CD8-positive, alpha-beta T cell (primary cell): ENCODE measurements at regions of chr19 and their contacts with region 1.

Region 1: GRCh38 chr19:16371540-16371986 is 46.9 kb downstream of the KLF2 start:
- DNase-seq: peak; percentile 87 to 97 (median 92)
- ATAC-seq: peak; percentile 41
- H3K4me3 ChIP-seq: peak overlapping the region; percentile 33 to 44
- H3K4me3 Mint-ChIP-seq: no peak overlapping the region
- H3K27ac ChIP-seq: peak overlapping the region; percentile 91 to 95
- H3K27ac Mint-ChIP-seq: no peak overlapping the region
- H3K4me1 ChIP-seq: peaks cover 95% of the 10 kb centered on the region
- H3K4me1 Mint-ChIP-seq: peaks cover 68% of the 10 kb centered on the region
- H3K27me3 ChIP-seq: no peaks in the 10 kb centered on the region
- H3K27me3 Mint-ChIP-seq: no peaks in the 10 kb centered on the region
- CTCF ChIP-seq: no peak

Region 2: GRCh38 chr19:16330368-16330801 is 41.2 kb before region 1 on chr19:
- CTCF ChIA-PET with region 1: interaction called, 200 read pairs
- POLR2A ChIA-PET with region 1: interaction called, 2,627 read pairs
- intact Hi-C with region 1: loop called (anchors 1 kb)
- DNase-seq: peak; percentile 88 to 99 (median 95)
- ATAC-seq: peak; percentile 74
- H3K4me3 ChIP-seq: no peak overlapping the region
- H3K4me3 Mint-ChIP-seq: peak overlapping the region; percentile 59
- H3K27ac ChIP-seq: peak overlapping the region; percentile 93 to 99
- H3K27ac Mint-ChIP-seq: peak overlapping the region; percentile 96
- H3K4me1 ChIP-seq: peaks cover 36% of the 10 kb centered on the region
- H3K4me1 Mint-ChIP-seq: peaks cover 46% of the 10 kb centered on the region
- H3K27me3 ChIP-seq: no peaks in the 10 kb centered on the region
- H3K27me3 Mint-ChIP-seq: no peaks in the 10 kb centered on the region
- CTCF ChIP-seq: no peak

Region 3: DNA sequence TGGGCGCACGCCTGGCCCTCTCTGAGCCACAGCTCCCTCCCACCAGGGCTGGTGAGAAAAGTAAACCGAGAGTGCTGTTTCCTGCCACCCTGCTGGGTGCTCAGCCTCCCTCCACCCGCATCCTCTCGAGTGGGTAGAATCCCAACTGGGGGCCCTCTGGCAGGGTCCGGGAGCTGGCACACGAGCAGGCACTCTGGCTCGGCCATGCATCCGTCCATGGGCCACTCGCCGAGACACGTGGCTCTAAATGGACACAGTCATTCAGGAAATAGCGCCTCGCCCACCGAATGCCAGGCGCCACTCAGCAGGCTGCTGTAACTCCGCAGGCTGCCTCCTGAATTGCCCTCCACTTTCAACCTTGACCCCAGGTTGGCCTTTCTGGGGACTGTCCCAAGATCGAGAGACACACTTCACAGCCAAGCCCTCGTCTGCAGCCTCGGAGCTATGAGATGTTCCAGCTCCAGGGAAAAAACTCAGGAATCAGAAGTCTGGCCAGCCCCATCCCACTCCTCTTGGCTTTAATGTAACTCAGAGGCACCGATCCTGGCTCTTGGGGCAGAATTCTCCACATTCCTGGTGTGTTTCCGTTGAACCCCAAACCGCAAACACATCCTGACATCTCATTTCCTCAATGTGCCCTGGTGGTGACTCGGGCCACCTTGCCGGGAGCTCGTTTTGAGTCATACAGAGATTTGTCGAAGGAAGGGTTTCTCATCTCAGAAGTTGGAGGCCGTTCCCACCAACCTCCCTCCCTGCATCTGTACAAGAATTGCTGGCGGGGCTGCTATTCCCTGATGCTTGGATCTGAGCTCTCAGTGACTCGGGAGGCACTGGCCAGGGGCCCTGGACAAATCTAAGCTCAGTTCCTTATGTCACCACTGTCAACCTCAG is 32.8 kb before region 1 on chr19:
- CTCF ChIA-PET with region 1: interaction called, 200 read pairs
- POLR2A ChIA-PET with region 1: interaction called, 2,627 read pairs
- intact Hi-C with region 1: loop called in 1 of 2 experiments (anchors 1 kb)
- DNase-seq: peak in 6 of 9 experiments; percentile 55 to 83 (median 62)
- ATAC-seq: peak; percentile 49
- H3K4me3 ChIP-seq: peak overlapping the region; percentile 25 to 38
- H3K4me3 Mint-ChIP-seq: peak overlapping the region; percentile 81
- H3K27ac ChIP-seq: peak overlapping the region; percentile 28 to 76
- H3K27ac Mint-ChIP-seq: peak overlapping the region; percentile 94
- H3K4me1 ChIP-seq: peaks cover 71% of the 10 kb centered on the region
- H3K4me1 Mint-ChIP-seq: peaks cover 61% of the 10 kb centered on the region
- H3K27me3 ChIP-seq: no peaks in the 10 kb centered on the region
- H3K27me3 Mint-ChIP-seq: no peaks in the 10 kb centered on the region
- CTCF ChIP-seq: no peak

Region 4: DNA sequence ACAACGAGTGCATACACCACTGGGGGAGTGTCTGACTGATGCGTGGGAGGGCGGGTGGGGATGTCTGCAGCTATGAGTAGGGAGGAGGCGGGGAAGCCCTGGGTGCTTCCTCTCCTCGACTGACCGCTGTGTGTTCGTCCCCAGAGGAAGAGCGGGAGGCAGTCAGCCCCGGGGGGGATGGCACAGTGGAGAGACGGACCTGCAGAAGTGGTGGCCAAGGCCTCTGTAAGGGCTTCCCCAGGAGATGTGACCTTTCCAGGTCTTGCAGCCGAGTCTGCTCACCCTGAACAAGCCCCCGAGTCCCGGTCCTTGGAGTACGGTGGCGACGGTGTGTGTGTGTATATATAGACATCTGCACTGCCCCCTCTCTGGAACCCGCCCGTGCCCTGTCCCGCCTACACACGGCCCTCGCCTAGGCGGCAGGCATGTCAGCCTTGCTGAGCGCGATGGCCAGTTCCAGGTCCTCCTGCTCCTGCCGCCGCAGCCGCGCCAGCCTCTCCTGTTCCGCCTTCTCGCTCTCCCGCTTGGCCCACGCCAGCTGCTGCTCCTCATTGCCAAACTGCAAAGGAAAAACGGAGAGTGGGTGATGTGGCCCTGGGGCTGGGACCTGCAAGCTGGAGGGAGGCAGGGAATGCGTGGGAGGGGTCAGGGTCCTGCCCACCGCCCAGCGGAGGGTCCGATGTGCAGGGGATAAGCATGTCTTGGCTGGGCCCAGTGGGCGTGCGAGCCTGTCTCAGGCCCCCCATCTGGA is 16.1 kb before region 1 on chr19:
- CTCF ChIA-PET with region 1: interaction called, 3 read pairs
- POLR2A ChIA-PET with region 1: interaction called, 26 read pairs
- intact Hi-C with region 1: loop called in 1 of 2 experiments (anchors 2 kb)
- DNase-seq: peak in 2 of 9 experiments; percentile 2 to 52
- ATAC-seq: peak; percentile 63
- H3K4me3 ChIP-seq: no peak overlapping the region
- H3K4me3 Mint-ChIP-seq: no peak overlapping the region
- H3K27ac ChIP-seq: no peak overlapping the region
- H3K27ac Mint-ChIP-seq: peak overlapping the region; percentile 62
- H3K4me1 ChIP-seq: peaks cover 56% of the 10 kb centered on the region
- H3K4me1 Mint-ChIP-seq: peaks cover 63% of the 10 kb centered on the region
- H3K27me3 ChIP-seq: no peaks in the 10 kb centered on the region
- H3K27me3 Mint-ChIP-seq: no peaks in the 10 kb centered on the region
- CTCF ChIP-seq: no peak

Region 5: DNA sequence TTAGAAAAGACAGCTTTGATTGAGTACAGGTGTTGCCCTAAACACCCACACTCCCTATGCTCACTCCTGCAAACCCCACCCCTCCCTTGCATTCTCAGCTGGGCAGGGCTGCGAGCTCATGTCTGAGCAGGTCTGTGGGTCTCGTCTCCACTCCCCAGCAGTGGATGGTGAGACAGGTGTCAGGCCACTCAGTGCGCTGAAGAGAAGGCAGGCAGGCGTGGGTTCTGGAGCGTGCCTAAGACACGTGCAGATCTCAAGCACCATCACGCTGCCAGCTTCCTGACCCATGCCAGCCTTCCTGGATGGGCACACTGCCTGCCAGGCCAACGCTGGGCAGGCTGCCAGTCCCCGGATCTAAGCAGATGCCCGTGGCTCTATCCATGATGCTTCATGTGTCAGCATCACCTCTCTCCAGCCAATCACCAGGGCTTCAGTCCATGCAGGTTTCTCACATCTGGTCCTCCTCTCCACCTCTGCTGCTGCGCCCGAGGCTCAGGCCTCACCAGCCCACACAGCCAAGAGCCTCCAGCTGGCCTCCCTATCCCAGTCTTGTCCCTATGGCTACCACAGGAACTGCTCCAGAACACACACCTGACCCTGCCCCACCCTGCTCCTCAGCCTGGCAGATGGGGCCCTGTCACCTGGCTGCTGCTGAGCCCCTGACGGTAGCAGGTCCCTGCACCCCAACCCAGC is 57.6 kb after region 1 on chr19:
- CTCF ChIA-PET with region 1: no interaction called
- POLR2A ChIA-PET with region 1: no interaction called
- intact Hi-C with region 1: no loop called
- DNase-seq: no peak
- ATAC-seq: no peak
- H3K4me3 ChIP-seq: no peak overlapping the region
- H3K4me3 Mint-ChIP-seq: no peak overlapping the region
- H3K27ac ChIP-seq: no peak overlapping the region
- H3K27ac Mint-ChIP-seq: no peak overlapping the region
- H3K4me1 ChIP-seq: no peaks in the 10 kb centered on the region
- H3K4me1 Mint-ChIP-seq: no peaks in the 10 kb centered on the region
- H3K27me3 ChIP-seq: no peaks in the 10 kb centered on the region
- H3K27me3 Mint-ChIP-seq: no peaks in the 10 kb centered on the region
- CTCF ChIP-seq: no peak

Region 6: GRCh38 chr19:16462757-16463250 is 91.2 kb after region 1 on chr19:
- CTCF ChIA-PET with region 1: no interaction called
- POLR2A ChIA-PET with region 1: no interaction called
- intact Hi-C with region 1: no loop called
- DNase-seq: no peak
- ATAC-seq: no peak
- H3K4me3 ChIP-seq: no peak overlapping the region
- H3K4me3 Mint-ChIP-seq: no peak overlapping the region
- H3K27ac ChIP-seq: peak overlapping the region in 1 of 2 experiments; percentile 12
- H3K27ac Mint-ChIP-seq: peak overlapping the region; percentile 35
- H3K4me1 ChIP-seq: peaks cover 38% of the 10 kb centered on the region
- H3K4me1 Mint-ChIP-seq: peaks cover 62% of the 10 kb centered on the region
- H3K27me3 ChIP-seq: no peaks in the 10 kb centered on the region
- H3K27me3 Mint-ChIP-seq: no peaks in the 10 kb centered on the region
- CTCF ChIP-seq: no peak